ENCODE measurements at regions of chr17 and their contacts with region 1.

Region 1: GRCh38 chr17:59155439-59156182 is at the start of gene PRR11:
- DNase-seq: peak; percentile 96
- total RNA-seq, gene PRR11: 0.78 TPM

Region 2: GRCh38 chr17:59106463-59107305 is 48.9 kb before region 1 on chr17 and contains the start of gene TRIM37:
- intact Hi-C with region 1: loop called (anchors 2 kb)
- DNase-seq: peak; percentile 99
- total RNA-seq, gene TRIM37: 16.0 TPM